ENCODE measurements at regions of chr2 and their contacts with region 1.

Region 1: GRCh38 chr2:225660262-225661131 is 261.0 kb downstream of the NYAP2 start:
- DNase-seq: peak; percentile 80 to 89
- ATAC-seq: no peak
- H3K4me3 ChIP-seq: no peak overlapping the region
- H3K27ac ChIP-seq: no peak overlapping the region
- H3K4me1 ChIP-seq: no peaks in the 10 kb centered on the region
- H3K27me3 ChIP-seq: no peaks in the 10 kb centered on the region

Region 2: GRCh38 chr2:225122583-225123486 is 537.7 kb before region 1 on chr2:
- intact Hi-C with region 1: loop called (anchors 5 kb)
- DNase-seq: no peak
- ATAC-seq: no peak
- H3K4me3 ChIP-seq: no peak overlapping the region
- H3K27ac ChIP-seq: no peak overlapping the region
- H3K4me1 ChIP-seq: no peaks in the 10 kb centered on the region
- H3K27me3 ChIP-seq: no peaks in the 10 kb centered on the region

Region 3: DNA sequence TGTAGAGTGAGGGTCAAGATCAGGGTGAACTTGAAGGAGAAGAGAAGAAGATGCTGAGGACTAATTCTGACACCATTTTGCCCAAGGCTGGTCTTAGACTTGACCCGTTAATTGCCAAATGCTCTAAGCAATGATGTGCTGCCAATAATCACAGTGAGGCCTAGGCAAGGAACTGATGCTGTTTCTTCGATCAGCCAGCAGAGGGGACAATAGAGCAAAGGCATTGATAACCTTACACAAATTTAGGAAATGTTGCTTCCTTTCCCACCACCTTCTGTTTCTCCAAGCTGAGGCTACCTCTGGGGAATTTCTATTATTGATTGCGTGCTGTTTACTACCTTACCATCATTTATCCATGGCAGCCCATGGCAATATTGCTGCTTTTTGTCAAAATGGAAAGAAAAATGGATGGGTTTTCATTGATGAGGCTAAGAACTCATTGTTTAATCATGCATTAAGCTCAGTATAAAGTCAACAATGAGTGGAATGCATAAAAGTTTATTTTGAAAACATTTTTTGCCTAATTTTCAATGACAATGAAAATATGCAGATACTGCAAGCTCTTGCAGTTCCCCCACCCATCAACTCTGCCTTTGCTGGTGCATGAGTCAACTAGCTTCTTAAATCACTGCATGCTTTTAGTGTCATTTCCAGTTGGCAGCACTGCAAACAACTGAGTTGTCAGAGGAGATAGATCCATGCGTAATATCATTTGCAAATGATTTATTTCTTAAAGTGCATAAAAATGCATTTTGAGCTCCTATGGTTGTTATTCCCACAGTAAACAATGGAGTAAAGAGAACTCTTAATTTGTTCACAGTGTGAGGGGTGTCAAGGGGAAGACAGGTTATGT is 377.4 kb before region 1 on chr2:
- intact Hi-C with region 1: loop called in 1 of 2 experiments (anchors 5 kb)
- DNase-seq: no peak
- ATAC-seq: peak; percentile 38
- H3K4me3 ChIP-seq: no peak overlapping the region
- H3K27ac ChIP-seq: no peak overlapping the region
- H3K4me1 ChIP-seq: no peaks in the 10 kb centered on the region
- H3K27me3 ChIP-seq: no peaks in the 10 kb centered on the region

Region 4: GRCh38 chr2:225556461-225556860 is 104.0 kb before region 1 on chr2:
- intact Hi-C with region 1: no loop called
- DNase-seq: no peak
- ATAC-seq: no peak
- H3K4me3 ChIP-seq: no peak overlapping the region
- H3K27ac ChIP-seq: no peak overlapping the region
- H3K4me1 ChIP-seq: no peaks in the 10 kb centered on the region
- H3K27me3 ChIP-seq: no peaks in the 10 kb centered on the region

Measured in aorta (tissue), 5 donors.